ENCODE measurements at regions of chr6 and their contacts with region 1.

Region 1: GRCh38 chr6:41072676-41073623 is at the start of gene NFYA:
- DNase-seq: peak; percentile 100
- H3K4me3 ChIP-seq: peak within 1 kb of the TSS; percentile 59 to 94
- H3K4me3 Mint-ChIP-seq: peak within 1 kb of the TSS; percentile 92 to 98 (median 97)
- H3K27ac ChIP-seq: peak within 1 kb of the TSS; percentile 97
- H3K27ac Mint-ChIP-seq: peak within 1 kb of the TSS; percentile 90 to 99 (median 98)
- H3K4me1 ChIP-seq: peaks cover 47% of the 10 kb centered on the region
- H3K4me1 Mint-ChIP-seq: peaks cover 37 to 65% (median 49%) of the 10 kb centered on the region in 4 donors
- H3K27me3 ChIP-seq: no peaks in the 10 kb centered on the region
- H3K27me3 Mint-ChIP-seq: no peaks in the 10 kb centered on the region
- total RNA-seq, gene NFYA: 56.7 to 56.9 TPM

Region 2: DNA sequence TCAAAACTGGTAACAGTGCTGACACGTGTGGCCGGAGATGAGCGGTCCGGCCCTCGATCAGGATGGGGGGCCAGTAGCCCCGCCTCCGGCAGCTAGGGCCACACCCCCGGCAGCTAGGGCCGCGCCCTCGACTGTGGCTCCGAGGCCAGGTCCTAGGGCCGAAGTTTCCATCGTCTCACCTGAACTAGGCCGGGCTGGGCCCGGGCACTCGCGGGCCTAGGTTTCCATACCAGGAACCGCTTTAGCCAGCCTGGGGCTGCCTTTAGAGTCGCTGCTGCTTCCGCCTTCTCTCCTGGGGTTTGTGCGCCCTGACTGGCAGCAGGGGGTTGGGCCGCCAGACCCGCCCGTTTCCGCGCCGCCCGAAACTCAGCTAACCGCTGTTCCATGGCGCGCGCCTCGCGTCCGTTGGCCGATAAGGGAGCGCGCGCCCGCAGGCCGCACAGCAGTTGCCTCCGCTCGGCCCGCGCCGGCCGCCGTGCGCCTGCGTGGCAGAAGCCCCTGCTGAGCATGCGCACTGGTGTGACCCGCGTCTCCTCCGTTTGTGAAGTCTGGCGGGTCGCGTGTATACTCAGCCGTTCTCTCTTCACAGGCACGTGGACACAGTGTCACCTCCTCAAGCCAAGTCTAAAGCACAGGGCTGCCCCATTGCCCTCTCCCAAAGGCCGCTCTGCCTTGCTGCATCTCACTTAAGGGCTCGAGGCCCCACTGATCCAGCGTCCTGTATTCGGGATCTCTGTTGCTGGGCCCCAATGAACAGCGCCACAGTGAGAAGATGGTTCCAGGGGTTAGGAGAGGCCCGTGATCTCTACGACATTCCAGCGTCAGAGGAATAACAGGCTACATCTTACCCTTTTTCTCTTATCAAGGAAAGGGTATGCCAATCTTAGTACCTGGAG is 1958.0 kb before region 1 on chr6 and contains the start of gene SAYSD1:
- CTCF ChIA-PET with region 1: no interaction called
- POLR2A ChIA-PET with region 1: no interaction called
- intact Hi-C with region 1: loop called (anchors 2 kb)
- DNase-seq: peak; percentile 89 to 94 (median 93)
- H3K4me3 ChIP-seq: peak within 1 kb of the TSS; percentile 79 to 97
- H3K4me3 Mint-ChIP-seq: peak within 1 kb of the TSS; percentile 97 to 99 (median 98)
- H3K27ac ChIP-seq: peak within 1 kb of the TSS; percentile 79
- H3K27ac Mint-ChIP-seq: peak within 1 kb of the TSS; percentile 92 to 99 (median 98)
- H3K4me1 ChIP-seq: peaks cover 44% of the 10 kb centered on the region
- H3K4me1 Mint-ChIP-seq: peaks cover 40 to 58% (median 48%) of the 10 kb centered on the region in 4 donors
- H3K27me3 ChIP-seq: no peaks in the 10 kb centered on the region
- H3K27me3 Mint-ChIP-seq: no peaks in the 10 kb centered on the region
- total RNA-seq, gene SAYSD1: 21.6 to 22.4 TPM

Region 3: DNA sequence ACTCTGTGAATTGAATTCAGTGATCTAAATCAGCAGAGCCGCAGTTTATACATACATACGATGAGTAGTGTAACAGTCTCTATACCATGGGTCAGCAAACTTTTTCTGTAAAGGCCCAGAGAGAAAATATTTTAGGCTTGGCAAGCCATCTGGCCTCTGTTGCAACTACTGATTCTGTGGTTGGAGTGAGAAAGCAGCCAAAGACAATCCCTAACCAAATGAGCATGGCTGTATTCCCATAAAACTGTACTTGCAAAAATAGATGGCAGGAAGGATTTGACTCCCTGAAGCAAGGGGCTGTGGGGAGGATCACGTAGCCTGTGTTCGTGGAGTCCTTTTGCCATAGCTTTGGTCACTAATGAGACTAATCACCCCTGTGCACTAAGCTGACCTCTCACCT is 1120.8 kb before region 1 on chr6:
- CTCF ChIA-PET with region 1: no interaction called
- POLR2A ChIA-PET with region 1: no interaction called
- intact Hi-C with region 1: no loop called
- DNase-seq: no peak
- H3K4me3 ChIP-seq: no peak overlapping the region
- H3K4me3 Mint-ChIP-seq: no peak overlapping the region
- H3K27ac ChIP-seq: no peak overlapping the region
- H3K27ac Mint-ChIP-seq: no peak overlapping the region
- H3K4me1 ChIP-seq: no peaks in the 10 kb centered on the region
- H3K4me1 Mint-ChIP-seq: no peaks in the 10 kb centered on the region
- H3K27me3 ChIP-seq: no peaks in the 10 kb centered on the region
- H3K27me3 Mint-ChIP-seq: peaks cover 0 to 3% of the 10 kb centered on the region in 2 donors

Region 4: GRCh38 chr6:41027799-41028628 is 44.9 kb before region 1 on chr6:
- CTCF ChIA-PET with region 1: interaction called, 16 read pairs
- POLR2A ChIA-PET with region 1: interaction called, 24 read pairs
- intact Hi-C with region 1: loop called (anchors 2 kb)
- DNase-seq: peak; percentile 56 to 79 (median 70)
- H3K4me3 ChIP-seq: peak overlapping the region; percentile 63 to 82
- H3K4me3 Mint-ChIP-seq: peak overlapping the region; percentile 78 to 91 (median 86)
- H3K27ac ChIP-seq: peak overlapping the region; percentile 45
- H3K27ac Mint-ChIP-seq: peak overlapping the region; percentile 68 to 96 (median 89)
- H3K4me1 ChIP-seq: peaks cover 25% of the 10 kb centered on the region
- H3K4me1 Mint-ChIP-seq: peaks cover 19 to 22% (median 20%) of the 10 kb centered on the region in 4 donors
- H3K27me3 ChIP-seq: no peaks in the 10 kb centered on the region
- H3K27me3 Mint-ChIP-seq: no peaks in the 10 kb centered on the region

Region 5: DNA sequence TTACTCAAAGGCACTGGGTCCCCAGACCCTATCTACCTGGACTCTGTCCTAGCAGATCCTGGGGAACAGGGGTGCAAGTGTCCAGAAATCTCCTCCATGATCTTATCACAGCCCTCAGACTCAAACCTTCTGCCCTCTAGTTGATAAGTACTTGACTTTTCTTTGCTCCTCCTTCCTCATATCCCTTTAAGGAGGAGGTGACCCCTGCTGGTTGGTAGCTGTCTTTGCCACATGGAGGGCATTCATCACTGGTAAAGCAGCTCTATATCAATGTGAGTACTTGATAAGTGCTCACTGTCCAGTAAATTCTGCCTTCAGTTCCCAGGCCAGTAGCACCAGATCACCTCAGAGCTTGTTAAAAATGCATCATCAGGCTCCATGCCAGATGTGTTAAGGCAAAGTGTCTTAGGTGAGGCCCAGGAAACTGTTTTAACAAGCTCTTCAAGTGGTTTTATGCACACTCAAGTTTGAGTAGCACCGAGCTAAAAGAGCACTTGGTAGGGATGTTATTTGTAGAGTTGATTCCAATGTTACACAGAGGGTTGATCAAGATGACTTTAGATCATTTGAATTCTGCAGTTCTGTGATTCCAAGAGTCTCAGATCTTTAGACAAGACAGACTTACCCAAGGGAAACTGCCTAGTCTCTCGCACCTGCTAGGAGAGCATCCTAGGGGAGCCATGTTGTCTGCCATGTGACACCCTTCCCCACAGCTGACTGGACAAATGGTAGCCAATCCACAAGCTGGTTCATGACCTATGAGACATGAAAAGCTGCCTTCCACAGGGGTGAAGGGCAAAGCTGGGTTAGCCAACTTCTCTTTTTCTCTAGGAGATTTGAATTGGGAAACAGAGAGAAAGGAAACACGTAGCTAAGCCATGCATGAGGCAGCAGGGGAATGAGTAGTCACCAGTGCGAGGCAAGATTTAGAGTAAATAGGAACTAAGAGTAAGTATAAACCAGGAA is 109.4 kb after region 1 on chr6:
- CTCF ChIA-PET with region 1: interaction called, 3 read pairs
- POLR2A ChIA-PET with region 1: no interaction called
- intact Hi-C with region 1: loop called (anchors 1 kb)
- DNase-seq: peak; percentile 47 to 65 (median 56)
- H3K4me3 ChIP-seq: no peak overlapping the region
- H3K4me3 Mint-ChIP-seq: no peak overlapping the region
- H3K27ac ChIP-seq: no peak overlapping the region
- H3K27ac Mint-ChIP-seq: peak overlapping the region in 1 of 7 donors; percentile 2
- H3K4me1 ChIP-seq: peaks cover 7% of the 10 kb centered on the region
- H3K4me1 Mint-ChIP-seq: peaks cover 7 to 14% (median 10%) of the 10 kb centered on the region in 4 donors
- H3K27me3 ChIP-seq: no peaks in the 10 kb centered on the region
- H3K27me3 Mint-ChIP-seq: peaks cover 3 to 6% of the 10 kb centered on the region in 2 donors

Region 6: GRCh38 chr6:41200296-41200900 is 127.4 kb after region 1 on chr6:
- CTCF ChIA-PET with region 1: interaction called, 3 read pairs
- POLR2A ChIA-PET with region 1: interaction called, 15 read pairs
- intact Hi-C with region 1: loop called (anchors 1 kb)
- DNase-seq: peak; percentile 62 to 79 (median 73)
- H3K4me3 ChIP-seq: peak overlapping the region; percentile 5 to 37
- H3K4me3 Mint-ChIP-seq: peak overlapping the region; percentile 68 to 86 (median 78)
- H3K27ac ChIP-seq: peak overlapping the region; percentile 78
- H3K27ac Mint-ChIP-seq: peak overlapping the region; percentile 94 to 98 (median 97)
- H3K4me1 ChIP-seq: peaks cover 61% of the 10 kb centered on the region
- H3K4me1 Mint-ChIP-seq: peaks cover 51 to 95% (median 65%) of the 10 kb centered on the region in 4 donors
- H3K27me3 ChIP-seq: no peaks in the 10 kb centered on the region
- H3K27me3 Mint-ChIP-seq: no peaks in the 10 kb centered on the region

Region 7: GRCh38 chr6:41560431-41561192 is 487.7 kb after region 1 on chr6:
- CTCF ChIA-PET with region 1: no interaction called
- POLR2A ChIA-PET with region 1: no interaction called
- intact Hi-C with region 1: loop called (anchors 5 kb)
- DNase-seq: peak; percentile 92 to 98 (median 93)
- H3K4me3 ChIP-seq: peak overlapping the region; percentile 59 to 87
- H3K4me3 Mint-ChIP-seq: peak overlapping the region; percentile 84 to 92 (median 87)
- H3K27ac ChIP-seq: peak overlapping the region; percentile 70
- H3K27ac Mint-ChIP-seq: peak overlapping the region; percentile 83 to 98 (median 94)
- H3K4me1 ChIP-seq: peaks cover 25% of the 10 kb centered on the region
- H3K4me1 Mint-ChIP-seq: peaks cover 16 to 42% (median 29%) of the 10 kb centered on the region in 4 donors
- H3K27me3 ChIP-seq: no peaks in the 10 kb centered on the region
- H3K27me3 Mint-ChIP-seq: no peaks in the 10 kb centered on the region

Region 8: GRCh38 chr6:41735427-41736356 is 662.7 kb after region 1 on chr6 and contains the start of gene TFEB:
- CTCF ChIA-PET with region 1: no interaction called
- POLR2A ChIA-PET with region 1: no interaction called
- intact Hi-C with region 1: loop called (anchors 2 kb)
- DNase-seq: peak; percentile 92 to 95 (median 92)
- H3K4me3 ChIP-seq: peak within 1 kb of the TSS in 1 of 2 donors; percentile 64
- H3K4me3 Mint-ChIP-seq: peak within 1 kb of the TSS; percentile 77 to 91 (median 82)
- H3K27ac ChIP-seq: peak within 1 kb of the TSS; percentile 75
- H3K27ac Mint-ChIP-seq: peak within 1 kb of the TSS; percentile 42 to 93 (median 76)
- H3K4me1 ChIP-seq: peaks cover 38% of the 10 kb centered on the region
- H3K4me1 Mint-ChIP-seq: peaks cover 16 to 35% (median 26%) of the 10 kb centered on the region in 4 donors
- H3K27me3 ChIP-seq: no peaks in the 10 kb centered on the region
- H3K27me3 Mint-ChIP-seq: peaks cover 0 to 1% of the 10 kb centered on the region in 2 donors
- total RNA-seq, gene TFEB: 12.2 to 15.7 TPM